Activated CD4-positive, alpha-beta T cell treated with anti-CD3 and anti-CD28 coated beads, Interleukin-2, amount 10 ng/mL, durations not matched to agents 24 days and 14 days (primary cell): ENCODE measurements at regions of chr1 and their contacts with region 1.

Region 1: DNA sequence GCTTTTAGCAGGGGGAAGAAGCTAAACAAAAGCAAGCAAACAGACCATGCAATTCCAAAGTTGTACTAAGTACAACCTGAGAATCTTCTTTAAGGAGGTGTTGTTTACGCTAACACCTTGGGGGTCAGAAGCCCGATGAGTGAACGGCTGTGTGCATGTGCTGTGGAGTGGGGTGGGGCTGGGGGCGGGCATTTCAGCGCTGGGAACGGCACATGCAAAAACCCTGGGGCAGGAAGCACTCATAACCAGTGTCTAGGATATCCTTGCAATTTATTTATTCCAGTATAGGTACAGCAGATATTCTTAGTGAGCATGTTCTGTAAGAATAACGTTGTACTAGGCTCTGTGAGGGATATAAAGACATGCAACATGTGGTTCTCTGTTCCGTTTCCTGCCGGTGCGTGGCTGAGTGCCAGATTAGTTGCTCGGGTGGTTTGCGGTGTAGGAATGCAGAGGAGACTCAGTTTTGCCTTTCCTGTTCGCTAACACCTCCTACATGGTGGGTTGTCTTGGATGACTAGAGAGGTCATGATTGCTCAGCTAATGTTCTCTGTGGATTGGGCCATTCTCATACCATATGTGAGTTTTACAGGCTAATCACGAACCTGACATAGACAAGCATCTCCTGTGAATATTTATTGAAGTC is 3.7 kb downstream of the FASLG start:
- DNase-seq: peak; percentile 94
- H3K4me3 Mint-ChIP-seq: peak overlapping the region; percentile 79
- H3K27ac Mint-ChIP-seq: peak overlapping the region; percentile 83
- H3K4me1 Mint-ChIP-seq: peaks cover 64% of the 10 kb centered on the region
- H3K27me3 Mint-ChIP-seq: peaks cover 2% of the 10 kb centered on the region

Region 2: DNA sequence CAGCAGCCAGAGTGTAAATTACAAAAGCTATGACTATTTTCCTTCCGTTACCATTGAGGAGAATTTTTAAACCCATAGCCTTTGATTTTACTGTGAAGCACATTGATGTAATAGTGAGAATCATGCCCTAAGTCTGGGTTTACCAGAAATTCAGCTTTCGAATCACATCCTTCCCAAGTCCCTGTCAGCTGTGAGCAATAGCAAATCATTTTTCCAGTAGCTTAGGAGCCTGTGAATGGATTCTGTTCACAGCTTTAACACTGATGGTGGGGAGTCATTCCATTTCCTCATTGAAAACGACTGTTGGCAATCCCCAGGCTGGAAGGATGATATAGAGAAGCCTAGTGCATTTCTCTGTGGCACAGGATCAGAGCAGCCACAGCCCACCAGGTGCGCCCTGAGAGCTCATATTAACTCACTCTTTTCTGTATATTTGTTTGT is 324.3 kb before region 1 on chr1:
- intact Hi-C with region 1: no loop called
- DNase-seq: peak; percentile 72
- H3K4me3 Mint-ChIP-seq: peak overlapping the region; percentile 16
- H3K27ac Mint-ChIP-seq: peak overlapping the region; percentile 51
- H3K4me1 Mint-ChIP-seq: peaks cover 36% of the 10 kb centered on the region
- H3K27me3 Mint-ChIP-seq: no peaks in the 10 kb centered on the region

Region 3: GRCh38 chr1:172449585-172450534 is 212.7 kb before region 1 on chr1:
- intact Hi-C with region 1: loop called (anchors 2 kb)
- DNase-seq: peak; percentile 83
- H3K4me3 Mint-ChIP-seq: peak overlapping the region; percentile 39
- H3K27ac Mint-ChIP-seq: peak overlapping the region; percentile 65
- H3K4me1 Mint-ChIP-seq: peaks cover 27% of the 10 kb centered on the region
- H3K27me3 Mint-ChIP-seq: peaks cover 1% of the 10 kb centered on the region

Region 4: GRCh38 chr1:172609528-172609927 is 53.1 kb before region 1 on chr1:
- intact Hi-C with region 1: loop called (anchors 1 kb)
- DNase-seq: no peak
- H3K4me3 Mint-ChIP-seq: no peak overlapping the region
- H3K27ac Mint-ChIP-seq: no peak overlapping the region
- H3K4me1 Mint-ChIP-seq: peaks cover 13% of the 10 kb centered on the region
- H3K27me3 Mint-ChIP-seq: no peaks in the 10 kb centered on the region

Region 5: DNA sequence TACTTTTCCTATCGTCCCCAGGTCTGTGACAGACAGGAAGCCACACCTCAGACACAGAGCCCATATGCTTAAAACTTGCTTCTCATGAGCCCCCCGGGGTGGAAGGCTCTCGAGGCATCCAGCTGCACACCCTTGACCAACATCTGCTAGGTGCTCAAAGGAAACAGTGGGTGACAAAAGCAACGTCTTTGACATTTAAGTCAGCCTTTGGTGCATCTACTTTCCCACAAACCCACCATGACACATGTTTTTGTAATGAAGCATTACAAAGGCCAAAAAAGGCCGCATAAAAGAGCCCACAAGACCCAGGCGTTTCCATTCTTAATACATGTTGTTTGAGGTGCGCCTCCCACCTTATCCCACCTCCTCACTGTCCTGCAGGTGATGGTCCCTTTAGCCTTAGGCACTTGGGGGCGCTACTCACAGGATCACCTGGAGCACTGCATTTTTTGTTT is 15.4 kb before region 1 on chr1:
- intact Hi-C with region 1: loop called (anchors 1 kb)
- DNase-seq: peak; percentile 73
- H3K4me3 Mint-ChIP-seq: peak overlapping the region; percentile 40
- H3K27ac Mint-ChIP-seq: peak overlapping the region; percentile 81
- H3K4me1 Mint-ChIP-seq: peaks cover 65% of the 10 kb centered on the region
- H3K27me3 Mint-ChIP-seq: peaks cover 5% of the 10 kb centered on the region

Region 6: DNA sequence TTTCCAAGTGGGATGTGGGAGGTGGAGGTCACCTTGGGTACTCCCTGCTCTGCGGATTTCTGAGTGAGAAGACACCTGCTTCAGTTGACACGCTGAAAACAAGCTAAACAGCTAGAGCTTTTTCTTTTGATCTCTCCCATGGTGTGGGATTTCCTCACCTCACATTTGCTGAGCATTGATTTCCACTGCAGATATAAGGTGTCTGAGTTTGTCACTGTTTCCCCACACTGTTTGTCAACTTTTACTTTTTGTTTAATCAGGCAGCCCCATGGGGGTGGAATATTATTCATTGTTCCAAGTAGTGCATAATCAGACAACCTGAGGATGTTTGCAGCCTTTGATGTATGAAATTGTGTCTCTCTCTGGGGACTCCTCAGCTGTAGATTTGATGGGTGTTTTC is 45.9 kb after region 1 on chr1:
- intact Hi-C with region 1: loop called (anchors 1 kb)
- DNase-seq: peak; percentile 87
- H3K4me3 Mint-ChIP-seq: peak overlapping the region; percentile 56
- H3K27ac Mint-ChIP-seq: peak overlapping the region; percentile 88
- H3K4me1 Mint-ChIP-seq: peaks cover 49% of the 10 kb centered on the region
- H3K27me3 Mint-ChIP-seq: peaks cover 2% of the 10 kb centered on the region

Region 7: DNA sequence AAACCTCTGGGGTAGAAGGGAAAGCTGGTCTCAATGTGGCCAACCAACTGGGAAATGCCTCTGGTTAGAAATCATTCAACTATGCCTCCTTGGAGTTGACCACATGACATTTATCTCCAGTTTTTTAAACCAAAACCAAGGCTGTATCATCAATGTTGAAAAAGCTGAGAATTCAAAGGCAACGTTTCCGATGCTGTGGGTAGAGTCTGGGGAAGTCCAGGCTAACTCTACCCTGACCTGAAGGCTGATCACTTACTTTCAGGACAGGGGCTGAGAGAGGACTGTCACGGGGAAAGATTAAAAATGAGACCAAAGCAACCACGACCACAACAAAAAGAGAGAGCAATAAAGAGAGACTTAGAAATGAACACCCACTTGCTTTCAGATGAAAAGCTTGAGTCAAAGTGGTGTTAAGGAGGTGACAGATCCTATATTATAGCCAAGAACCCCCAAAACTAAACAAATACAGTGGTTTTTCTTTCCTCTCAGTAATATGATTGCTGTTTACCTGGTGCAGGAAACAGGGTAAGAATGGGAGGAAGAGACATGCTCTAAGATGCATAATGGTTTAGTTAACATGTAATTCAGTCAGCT is 635.3 kb after region 1 on chr1:
- intact Hi-C with region 1: loop called (anchors 5 kb)
- DNase-seq: peak; percentile 68
- H3K4me3 Mint-ChIP-seq: no peak overlapping the region
- H3K27ac Mint-ChIP-seq: peak overlapping the region; percentile 51
- H3K4me1 Mint-ChIP-seq: peaks cover 20% of the 10 kb centered on the region
- H3K27me3 Mint-ChIP-seq: peaks cover 22% of the 10 kb centered on the region